HepG2 (cell line): ENCODE measurements at regions of chr2 and their contacts with region 1.

Region 1: GRCh38 chr2:37168217-37168981 is 11.6 kb upstream of the EIF2AK2 start:
- DNase-seq: peak; percentile 55
- ATAC-seq: peak; percentile 93
- H3K4me3 ChIP-seq: peak overlapping the region in 1 of 3 experiments; percentile 35; a peak in 1 of 6 replicates
- H3K27ac ChIP-seq: no peak overlapping the region
- H3K4me1 ChIP-seq: peaks cover 21% of the 10 kb centered on the region
- H3K27me3 ChIP-seq: peaks cover 0 to 4% of the 10 kb centered on the region in 2 experiments; a peak in 1 of 5 replicates
- CTCF ChIP-seq: peak; percentile 82
- EP300 ChIP-seq: no peak
- POLR2A ChIP-seq: no peak
- RAD21 ChIP-seq: peak; percentile 74

Region 2: GRCh38 chr2:36785179-36785795 is 383.1 kb before region 1 on chr2:
- CTCF ChIA-PET with region 1: no interaction called
- POLR2A ChIA-PET with region 1: no interaction called
- in situ Hi-C with region 1: no loop called
- intact Hi-C with region 1: no loop called
- DNase-seq: peak; percentile 65
- ATAC-seq: peak; percentile 88
- H3K4me3 ChIP-seq: no peak overlapping the region
- H3K27ac ChIP-seq: no peak overlapping the region
- H3K4me1 ChIP-seq: no peaks in the 10 kb centered on the region
- H3K27me3 ChIP-seq: peaks cover 4 to 64% of the 10 kb centered on the region in 2 experiments
- CTCF ChIP-seq: peak; percentile 89
- EP300 ChIP-seq: no peak
- POLR2A ChIP-seq: no peak
- RAD21 ChIP-seq: peak; percentile 53; the same call in 1 of the 2 replicates

Region 3: DNA sequence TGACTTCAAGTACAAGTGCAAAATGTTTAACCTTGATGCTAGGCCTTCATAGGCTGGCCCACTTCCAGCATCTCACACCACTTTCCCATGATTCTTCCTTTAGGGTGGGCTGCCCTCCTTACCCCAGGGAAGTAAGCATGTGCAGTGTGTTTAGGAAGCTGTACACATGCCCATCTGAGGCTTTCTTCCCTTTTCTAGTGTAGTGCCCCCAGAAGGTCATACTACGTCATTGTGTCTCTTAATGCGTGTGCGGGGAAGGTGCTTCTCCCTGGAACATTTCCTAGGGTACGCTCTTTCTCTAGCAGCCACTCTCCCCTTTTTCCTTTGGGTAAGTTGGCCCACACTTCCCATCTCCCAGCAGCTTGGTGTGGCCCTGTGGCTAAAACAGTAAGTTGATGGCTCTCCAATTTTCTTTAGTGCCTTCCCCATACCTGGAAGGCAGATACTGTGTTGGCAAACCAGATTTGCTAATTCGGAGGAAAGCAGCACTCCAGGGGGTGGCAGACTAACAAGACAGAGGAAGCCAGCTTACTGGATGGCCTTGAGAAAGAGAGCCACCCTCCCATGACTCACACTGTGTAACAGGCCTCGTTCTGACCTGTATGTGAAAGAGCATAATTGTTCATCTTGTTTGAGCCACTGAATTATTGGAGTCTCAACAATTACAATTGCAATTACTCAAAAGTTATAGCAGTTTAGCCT is 21.2 kb after region 1 on chr2:
- CTCF ChIA-PET with region 1: no interaction called
- POLR2A ChIA-PET with region 1: interaction called, 4 read pairs
- in situ Hi-C with region 1: no loop called
- intact Hi-C with region 1: loop called (anchors 1 kb)
- DNase-seq: peak; percentile 90
- ATAC-seq: peak; percentile 98
- H3K4me3 ChIP-seq: 0 out of 6 replicates have a peak overlapping the region, but pooled peaks of 2 of the 3 experiments have one; percentile 4 to 7
- H3K27ac ChIP-seq: no peak overlapping the region
- H3K4me1 ChIP-seq: peaks cover 21% of the 10 kb centered on the region
- H3K27me3 ChIP-seq: peaks cover 3 to 23% of the 10 kb centered on the region in 2 experiments; a peak in 3 of 5 replicates
- CTCF ChIP-seq: peak; percentile 66
- EP300 ChIP-seq: no peak
- POLR2A ChIP-seq: no peak
- RAD21 ChIP-seq: no peak

Region 4: DNA sequence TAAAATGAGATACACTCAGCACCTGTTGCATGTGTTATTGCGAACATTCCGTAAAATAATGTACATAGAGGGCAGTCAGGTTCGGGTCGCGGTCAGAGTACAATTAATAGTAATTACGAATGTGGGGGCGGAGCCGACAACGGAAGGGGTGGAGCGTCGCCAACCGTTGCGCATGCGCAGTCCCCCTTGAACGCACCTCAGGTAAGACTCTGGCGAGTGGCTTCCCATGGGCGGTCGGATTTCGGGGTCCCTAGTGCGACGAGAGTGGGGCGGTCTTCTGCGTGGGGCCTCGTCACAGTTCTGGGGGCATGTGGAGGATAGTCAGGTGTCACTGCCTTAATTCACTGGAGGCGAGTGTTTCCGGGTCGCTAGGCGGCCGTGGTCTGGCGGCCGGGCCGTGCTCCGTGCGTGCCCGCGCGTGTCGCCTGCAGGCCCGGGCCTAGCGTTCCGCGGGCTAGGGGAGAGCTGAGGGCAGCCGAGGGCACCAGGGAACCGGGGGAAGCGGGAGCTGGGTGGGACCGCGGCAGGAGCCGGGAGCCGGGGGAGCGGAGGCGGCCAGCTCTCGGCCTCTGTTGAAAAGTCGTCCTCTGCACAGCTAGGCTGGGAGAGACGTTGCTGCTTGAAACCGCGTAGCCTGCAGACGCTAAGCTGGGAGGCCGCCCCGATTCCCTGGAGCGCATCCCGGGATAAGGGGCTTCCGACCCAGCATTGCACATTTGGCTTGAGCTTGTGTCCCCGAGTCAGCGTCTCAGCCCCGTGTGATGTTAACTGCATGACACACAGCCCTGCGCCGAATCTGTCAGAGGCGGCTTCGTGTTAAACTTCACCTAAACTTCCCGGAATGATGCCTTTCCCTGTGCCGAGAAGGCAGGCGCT is 28.2 kb after region 1 on chr2 and contains the start of gene CEBPZOS:
- CTCF ChIA-PET with region 1: no interaction called
- POLR2A ChIA-PET with region 1: interaction called, 4 read pairs
- in situ Hi-C with region 1: no loop called
- intact Hi-C with region 1: loop called (anchors 2 kb)
- DNase-seq: peak; percentile 80
- ATAC-seq: peak; percentile 87
- H3K4me3 ChIP-seq: peak within 1 kb of the TSS; percentile 78 to 91 (median 90)
- H3K27ac ChIP-seq: peak within 1 kb of the TSS; percentile 70
- H3K4me1 ChIP-seq: peaks cover 34% of the 10 kb centered on the region
- H3K27me3 ChIP-seq: peaks cover 2 to 3% of the 10 kb centered on the region in 2 experiments; a peak in 1 of 5 replicates
- CTCF ChIP-seq: peak; percentile 3; the same call in 1 of the 2 replicates
- EP300 ChIP-seq: no peak; a peak in 1 of 4 replicates
- POLR2A ChIP-seq: peak; percentile 85 to 98
- RAD21 ChIP-seq: peak; percentile 47; the same call in 1 of the 2 replicates
- total RNA-seq, gene CEBPZOS: 18.6 and 25.6 TPM in 2 replicates